HepG2 (cell line): ENCODE measurements at regions of chr11 and their contacts with region 1.

Region 1: DNA sequence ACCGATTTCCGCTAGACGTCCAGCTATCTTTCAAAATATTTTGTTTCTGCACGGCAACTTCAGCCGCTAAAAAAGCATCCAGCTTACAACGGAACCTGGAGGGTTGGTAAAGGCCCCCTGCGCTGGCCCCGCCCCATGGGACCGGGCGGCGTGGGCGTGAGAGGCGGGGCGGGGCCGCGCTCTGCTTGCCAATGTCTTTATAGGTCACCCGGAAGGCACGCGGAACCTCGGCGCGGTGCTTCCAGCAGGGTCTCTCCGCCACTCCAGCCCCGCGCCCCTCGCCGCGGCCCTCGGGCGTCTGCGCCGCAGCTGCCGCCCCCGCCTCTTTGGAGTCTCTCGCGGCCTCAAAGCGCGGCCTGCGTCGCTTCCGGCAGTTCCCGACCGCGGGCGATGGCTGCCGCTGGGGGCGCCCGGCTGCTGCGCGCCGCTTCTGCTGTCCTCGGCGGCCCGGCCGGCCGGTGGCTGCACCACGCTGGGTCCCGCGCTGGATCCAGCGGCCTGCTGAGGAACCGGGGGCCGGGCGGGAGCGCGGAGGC is at the start of gene FDX1:
- DNase-seq: peak; percentile 71
- ATAC-seq: peak; percentile 93
- H3K4me3 ChIP-seq: peak within 1 kb of the TSS; percentile 61 to 96 (median 91)
- H3K27ac ChIP-seq: peak within 1 kb of the TSS; percentile 80
- H3K4me1 ChIP-seq: peaks cover 26% of the 10 kb centered on the region
- H3K27me3 ChIP-seq: no peaks in the 10 kb centered on the region; a peak in 1 of 5 replicates
- CTCF ChIP-seq: peak; percentile 61; the same call in 1 of the 2 replicates
- EP300 ChIP-seq: no peak
- POLR2A ChIP-seq: peak; percentile 30 to 58; a peak in 3 of 4 replicates
- RAD21 ChIP-seq: peak; percentile 61; the same call in 1 of the 2 replicates
- total RNA-seq, gene FDX1: 13.1 and 14.5 TPM in 2 replicates

Region 2: DNA sequence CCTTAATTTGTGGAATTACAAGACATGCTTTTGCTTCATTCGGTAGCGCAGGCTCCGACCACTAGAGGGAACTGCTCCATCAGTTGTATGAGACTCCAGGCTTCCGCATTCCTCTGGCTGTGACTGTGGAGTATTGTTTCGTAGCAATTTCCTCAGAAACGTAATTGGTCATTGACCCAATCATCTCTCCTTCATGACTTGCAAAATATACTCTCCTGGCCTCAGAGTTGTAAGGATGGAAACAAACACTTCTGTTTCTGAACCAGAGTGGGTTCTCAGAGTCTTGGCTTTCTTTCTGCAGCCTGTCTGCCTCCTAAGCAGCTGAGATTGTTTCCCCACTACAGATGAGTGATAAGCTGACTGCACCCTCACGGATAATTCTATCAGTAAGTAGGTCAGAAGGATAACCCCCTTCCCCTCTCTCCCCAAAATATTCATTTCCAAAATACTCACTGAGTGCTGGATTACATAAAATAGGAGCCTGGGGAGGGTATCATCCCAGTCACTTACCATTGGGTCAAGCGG is 483.4 kb before region 1 on chr11:
- CTCF ChIA-PET with region 1: no interaction called
- POLR2A ChIA-PET with region 1: no interaction called
- in situ Hi-C with region 1: no loop called
- intact Hi-C with region 1: loop called (anchors 5 kb)
- DNase-seq: peak; percentile 78
- ATAC-seq: peak; percentile 100
- H3K4me3 ChIP-seq: peak overlapping the region; percentile 35 to 47 (median 44); a peak in 4 of 6 replicates
- H3K27ac ChIP-seq: no peak overlapping the region
- H3K4me1 ChIP-seq: 0 out of 2 replicates have a peak, but pooled peaks cover 12% of the 10 kb centered on the region
- H3K27me3 ChIP-seq: no peaks in the 10 kb centered on the region; a peak in 2 of 5 replicates
- CTCF ChIP-seq: peak; percentile 83
- EP300 ChIP-seq: 0 out of 4 replicates have a peak, but pooled peaks of 1 of the 2 experiments have one; percentile 7
- POLR2A ChIP-seq: no peak
- RAD21 ChIP-seq: peak; percentile 51; the same call in 1 of the 2 replicates

Region 3: DNA sequence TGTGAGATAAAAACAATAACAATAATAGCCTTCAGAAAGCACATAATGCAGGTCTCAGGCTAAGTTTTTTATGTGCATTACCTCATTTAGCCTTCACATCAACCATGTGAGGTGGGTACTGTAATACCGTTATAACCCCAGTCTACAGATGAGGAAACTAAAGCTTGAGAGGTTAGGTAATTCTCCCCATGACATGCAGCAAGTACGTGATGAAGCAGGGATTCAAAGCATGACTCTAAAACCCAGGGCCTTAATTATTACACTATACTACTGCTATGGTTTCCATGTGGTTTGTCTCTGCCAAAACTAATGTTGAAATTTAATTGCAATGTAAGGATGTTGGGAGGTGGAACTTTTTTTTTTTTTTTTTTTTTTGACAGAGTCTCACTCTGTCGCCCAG is 37.7 kb before region 1 on chr11:
- CTCF ChIA-PET with region 1: no interaction called
- POLR2A ChIA-PET with region 1: no interaction called
- in situ Hi-C with region 1: no loop called
- intact Hi-C with region 1: no loop called
- DNase-seq: no peak
- ATAC-seq: no peak
- H3K4me3 ChIP-seq: no peak overlapping the region
- H3K27ac ChIP-seq: no peak overlapping the region
- H3K4me1 ChIP-seq: no peaks in the 10 kb centered on the region
- H3K27me3 ChIP-seq: no peaks in the 10 kb centered on the region; a peak in 1 of 5 replicates
- CTCF ChIP-seq: no peak
- EP300 ChIP-seq: no peak
- POLR2A ChIP-seq: no peak
- RAD21 ChIP-seq: no peak